Activated CD4-positive, alpha-beta memory T cell treated with anti-CD3 and anti-CD28 coated beads, Interleukin-2, amount 10 ng/mL, durations not matched to agents 7 days and 5 days (primary cell): ENCODE measurements at regions of chr1 and their contacts with region 1.

Region 1: GRCh38 chr1:61270761-61271411 is 188.5 kb downstream of the NFIA start:
- DNase-seq: no peak
- H3K4me3 Mint-ChIP-seq: no peak overlapping the region
- H3K27ac Mint-ChIP-seq: peak overlapping the region; percentile 77
- H3K4me1 Mint-ChIP-seq: peaks cover 36% of the 10 kb centered on the region
- H3K27me3 Mint-ChIP-seq: no peaks in the 10 kb centered on the region

Region 2: GRCh38 chr1:61202854-61203598 is 67.9 kb before region 1 on chr1:
- CTCF ChIA-PET with region 1: no interaction called
- POLR2A ChIA-PET with region 1: no interaction called
- DNase-seq: no peak
- H3K4me3 Mint-ChIP-seq: no peak overlapping the region
- H3K27ac Mint-ChIP-seq: no peak overlapping the region
- H3K4me1 Mint-ChIP-seq: no peaks in the 10 kb centered on the region
- H3K27me3 Mint-ChIP-seq: no peaks in the 10 kb centered on the region

Region 3: DNA sequence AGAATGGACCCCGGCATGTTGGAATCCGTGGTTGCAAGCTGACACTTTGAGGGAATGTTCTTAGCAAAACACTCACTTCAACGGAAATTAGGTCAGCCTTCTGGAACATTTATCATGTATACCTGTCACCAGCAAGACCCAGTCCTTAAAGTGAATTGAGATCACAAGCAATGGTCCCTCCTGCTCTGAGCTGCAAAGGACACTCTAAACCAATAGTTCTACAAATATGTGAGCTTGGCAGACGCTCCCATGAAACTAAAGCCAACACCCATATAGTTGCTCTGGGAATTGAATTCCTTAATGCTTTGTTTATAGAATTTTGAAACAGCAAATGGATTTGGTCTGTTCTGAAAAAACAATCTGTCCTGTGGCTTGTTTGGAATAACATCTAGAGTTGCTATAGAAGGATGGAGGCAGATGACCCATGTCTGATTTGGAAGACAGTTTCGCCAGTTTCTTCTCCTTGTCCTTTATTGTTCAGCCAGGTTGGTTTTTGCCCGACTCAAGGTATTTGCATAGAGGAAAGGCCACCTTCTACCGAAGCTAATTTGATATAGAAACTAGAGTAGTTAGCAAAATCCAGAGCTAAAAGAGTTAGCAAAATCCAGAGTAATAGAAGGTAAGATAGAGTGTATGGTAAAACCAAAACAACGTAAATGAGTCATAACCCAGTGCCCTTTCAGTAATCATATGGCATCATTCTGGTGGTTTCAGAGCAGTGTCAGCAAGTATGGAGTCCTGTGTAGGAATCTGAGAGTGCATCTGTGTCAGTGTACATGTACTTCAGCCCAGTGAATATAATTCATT is 47.6 kb after region 1 on chr1:
- CTCF ChIA-PET with region 1: no interaction called
- POLR2A ChIA-PET with region 1: interaction called, 13 read pairs
- DNase-seq: peak; percentile 34
- H3K4me3 Mint-ChIP-seq: peak overlapping the region; percentile 31
- H3K27ac Mint-ChIP-seq: peak overlapping the region; percentile 56
- H3K4me1 Mint-ChIP-seq: peaks cover 32% of the 10 kb centered on the region
- H3K27me3 Mint-ChIP-seq: no peaks in the 10 kb centered on the region

Region 4: GRCh38 chr1:61332196-61332753 is 61.4 kb after region 1 on chr1:
- CTCF ChIA-PET with region 1: interaction called, 10 read pairs
- POLR2A ChIA-PET with region 1: interaction called, 5 read pairs
- DNase-seq: no peak
- H3K4me3 Mint-ChIP-seq: no peak overlapping the region
- H3K27ac Mint-ChIP-seq: peak overlapping the region; percentile 58
- H3K4me1 Mint-ChIP-seq: peaks cover 23% of the 10 kb centered on the region
- H3K27me3 Mint-ChIP-seq: no peaks in the 10 kb centered on the region